Activated CD8-positive, alpha-beta memory T cell treated with anti-CD3 and anti-CD28 coated beads, Interleukin-2, amount 10 ng/mL, durations not matched to agents 7 days and 5 days (primary cell): ENCODE measurements at regions of chr11 and their contacts with region 1.

Region 1: DNA sequence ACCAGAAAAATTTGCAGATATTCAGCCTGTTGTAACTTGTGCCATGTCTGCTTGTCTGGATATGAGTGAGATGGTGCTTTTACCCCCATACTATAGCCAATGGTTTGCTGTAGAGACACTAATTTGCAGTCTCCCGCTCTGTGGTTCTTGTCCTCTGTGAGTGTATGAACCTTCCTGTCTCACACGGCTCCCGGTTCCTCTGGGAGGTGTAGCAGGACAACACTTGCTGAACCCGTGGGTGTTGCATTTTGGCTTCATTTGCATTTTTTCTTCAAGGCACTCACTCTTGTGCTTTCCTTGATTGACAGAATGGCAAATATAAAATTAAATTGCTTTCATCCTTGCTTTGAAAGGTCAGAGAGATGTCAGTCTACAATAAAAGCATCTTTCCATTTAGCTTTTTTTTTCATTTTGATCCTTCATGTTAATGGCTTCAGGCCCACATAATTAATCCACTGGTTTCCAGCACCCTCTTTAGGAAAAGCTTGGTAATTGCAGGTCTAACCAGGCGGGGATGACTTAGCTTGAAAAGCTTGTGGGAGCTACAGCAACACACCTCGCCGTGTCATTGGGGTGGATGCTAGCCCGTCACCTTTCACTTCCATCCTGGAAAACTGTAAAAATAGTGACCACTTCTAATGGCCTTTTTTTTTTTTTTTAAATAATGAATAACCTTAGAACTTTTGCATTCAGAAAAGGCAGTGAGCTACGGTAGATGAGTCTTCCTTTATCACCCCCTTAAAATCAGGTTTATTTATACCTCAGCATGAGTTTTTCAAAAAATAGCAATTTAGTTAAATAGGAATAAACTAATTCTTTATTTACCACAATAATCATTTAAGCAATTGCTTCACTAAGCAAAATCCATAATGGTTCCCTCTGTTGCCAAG is 27.4 kb upstream of the ST14 start:
- DNase-seq: peak; percentile 59
- ATAC-seq: peak; percentile 66
- H3K4me3 Mint-ChIP-seq: no peak overlapping the region
- H3K27ac Mint-ChIP-seq: no peak overlapping the region
- H3K4me1 Mint-ChIP-seq: no peaks in the 10 kb centered on the region
- H3K27me3 Mint-ChIP-seq: no peaks in the 10 kb centered on the region

Region 2: DNA sequence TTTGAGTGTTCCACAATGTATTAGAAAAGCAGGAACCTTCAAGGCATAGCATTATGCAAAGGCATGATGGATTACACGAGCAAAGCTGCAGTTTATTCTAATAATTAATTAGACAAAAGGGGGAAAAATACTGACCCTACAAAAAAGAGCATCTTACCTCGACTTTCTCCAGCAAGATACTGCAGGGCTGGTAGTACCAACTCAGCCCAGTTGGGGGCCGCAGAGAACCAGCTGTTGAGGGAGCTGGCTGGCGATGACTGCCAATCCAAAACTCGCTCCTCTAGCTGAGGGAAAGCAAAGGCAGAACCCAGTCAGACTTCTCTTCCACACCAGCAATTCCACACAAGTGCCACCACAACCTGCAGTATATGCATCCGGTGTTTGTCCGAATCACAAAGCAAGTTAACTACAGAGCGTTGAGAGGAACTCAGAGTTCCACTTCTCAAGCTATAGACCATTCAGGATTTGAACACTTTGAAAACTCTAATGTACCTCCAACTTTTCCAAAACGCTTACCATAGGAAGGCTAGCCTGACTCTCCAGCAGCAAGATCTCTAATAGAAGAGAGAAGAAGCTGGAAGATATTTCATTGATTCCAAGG is 250.5 kb before region 1 on chr11:
- CTCF ChIA-PET with region 1: interaction called, 22 read pairs
- DNase-seq: peak; percentile 57
- ATAC-seq: peak; percentile 51
- H3K4me3 Mint-ChIP-seq: no peak overlapping the region
- H3K27ac Mint-ChIP-seq: no peak overlapping the region
- H3K4me1 Mint-ChIP-seq: no peaks in the 10 kb centered on the region
- H3K27me3 Mint-ChIP-seq: no peaks in the 10 kb centered on the region

Region 3: DNA sequence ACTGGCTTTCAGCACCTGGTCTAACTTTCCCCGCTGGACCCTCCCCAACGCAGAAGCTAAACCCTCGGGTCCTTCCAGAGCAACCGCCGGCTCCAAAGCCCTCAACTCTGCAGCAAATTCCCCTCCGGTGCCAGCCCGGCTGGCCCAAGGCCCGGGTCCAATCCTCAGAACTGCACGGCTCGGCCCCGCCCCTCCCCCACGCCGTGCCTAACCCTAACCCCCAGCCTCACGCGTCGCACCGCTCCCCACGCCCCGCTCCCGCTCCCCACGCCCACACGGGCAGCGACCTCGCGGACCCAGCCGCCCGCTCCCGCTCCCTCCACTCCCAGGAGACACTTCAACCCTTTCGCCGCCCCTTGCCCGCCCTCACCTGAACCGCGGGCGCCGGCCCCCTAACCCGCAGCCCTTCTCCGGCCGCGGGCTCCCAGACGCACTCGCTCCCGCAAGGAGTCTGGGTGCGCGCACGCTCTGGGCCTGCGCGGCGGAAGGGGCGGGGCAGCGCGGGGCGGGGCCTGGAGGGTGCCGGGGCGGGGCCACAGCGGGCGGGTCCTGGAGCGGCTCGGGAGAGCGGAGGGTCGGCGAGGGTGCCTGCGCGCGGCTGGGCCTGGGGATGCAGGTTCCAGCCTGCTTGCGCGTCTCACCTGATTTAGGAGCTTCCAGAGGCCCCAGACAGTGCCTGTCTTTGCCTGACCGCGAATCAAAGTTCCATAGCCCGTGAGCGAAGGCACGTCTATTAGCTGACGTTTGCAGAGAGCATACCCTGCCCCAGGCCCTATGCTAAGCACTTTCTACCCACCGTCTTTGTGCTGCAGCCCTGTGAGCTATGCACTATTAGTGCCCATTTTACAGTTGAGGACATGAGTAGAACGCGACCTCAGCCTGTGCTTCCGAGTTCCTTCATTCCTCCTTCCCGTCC is 236.8 kb before region 1 on chr11 and contains the start of gene NFRKB:
- CTCF ChIA-PET with region 1: interaction called, 11 read pairs
- DNase-seq: peak; percentile 88
- ATAC-seq: peak; percentile 99
- H3K4me3 Mint-ChIP-seq: peak within 1 kb of the TSS; percentile 83
- H3K27ac Mint-ChIP-seq: peak within 1 kb of the TSS; percentile 85
- H3K4me1 Mint-ChIP-seq: peaks cover 29% of the 10 kb centered on the region
- H3K27me3 Mint-ChIP-seq: peaks cover 6% of the 10 kb centered on the region
- total RNA-seq, gene NFRKB: 31.8 to 39.9 TPM

Region 4: DNA sequence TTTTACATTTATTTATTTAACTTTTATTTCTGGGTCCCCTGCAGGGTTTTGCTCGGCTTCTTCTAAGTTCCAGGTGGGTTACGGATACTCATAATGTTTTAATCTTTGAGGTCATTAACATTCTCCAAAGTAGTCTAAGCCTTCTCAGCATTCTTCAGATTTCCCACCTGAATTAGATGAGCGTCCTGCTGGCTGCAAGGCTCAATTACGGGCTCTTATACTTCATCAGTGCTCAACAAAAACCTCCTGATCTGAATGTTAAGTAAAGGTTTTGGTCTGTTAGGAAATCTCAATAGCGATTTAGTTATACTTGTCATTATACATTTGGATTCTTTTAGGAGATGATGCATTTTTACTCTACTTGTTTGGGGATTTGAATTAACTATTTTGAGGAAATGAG is 209.5 kb before region 1 on chr11:
- CTCF ChIA-PET with region 1: interaction called, 102 read pairs
- DNase-seq: no peak
- ATAC-seq: no peak
- H3K4me3 Mint-ChIP-seq: no peak overlapping the region
- H3K27ac Mint-ChIP-seq: no peak overlapping the region
- H3K4me1 Mint-ChIP-seq: peaks cover 11% of the 10 kb centered on the region
- H3K27me3 Mint-ChIP-seq: no peaks in the 10 kb centered on the region

Region 5: DNA sequence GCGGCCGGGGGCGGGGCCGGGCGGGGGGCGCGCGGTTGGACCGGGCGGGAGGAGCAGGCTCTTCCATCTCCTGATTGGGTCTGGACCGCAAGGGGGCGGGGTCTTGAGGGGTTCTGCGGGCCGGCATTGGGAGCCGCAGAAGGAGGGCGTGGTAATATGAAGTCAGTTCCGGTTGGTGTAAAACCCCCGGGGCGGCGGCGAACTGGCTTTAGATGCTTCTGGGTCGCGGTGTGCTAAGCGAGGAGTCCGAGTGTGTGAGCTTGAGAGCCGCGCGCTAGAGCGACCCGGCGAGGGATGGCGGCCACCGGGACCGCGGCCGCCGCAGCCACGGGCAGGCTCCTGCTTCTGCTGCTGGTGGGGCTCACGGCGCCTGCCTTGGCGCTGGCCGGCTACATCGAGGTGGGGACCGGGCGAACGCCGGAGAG is 62.5 kb before region 1 on chr11 and contains the start of gene APLP2:
- CTCF ChIA-PET with region 1: interaction called, 22 read pairs
- DNase-seq: peak; percentile 98
- ATAC-seq: peak; percentile 95
- H3K4me3 Mint-ChIP-seq: peak within 1 kb of the TSS; percentile 90
- H3K27ac Mint-ChIP-seq: peak within 1 kb of the TSS; percentile 91
- H3K4me1 Mint-ChIP-seq: peaks cover 18% of the 10 kb centered on the region
- H3K27me3 Mint-ChIP-seq: peaks cover 27% of the 10 kb centered on the region
- total RNA-seq, gene APLP2: 21.9 to 33.5 TPM

Region 6: DNA sequence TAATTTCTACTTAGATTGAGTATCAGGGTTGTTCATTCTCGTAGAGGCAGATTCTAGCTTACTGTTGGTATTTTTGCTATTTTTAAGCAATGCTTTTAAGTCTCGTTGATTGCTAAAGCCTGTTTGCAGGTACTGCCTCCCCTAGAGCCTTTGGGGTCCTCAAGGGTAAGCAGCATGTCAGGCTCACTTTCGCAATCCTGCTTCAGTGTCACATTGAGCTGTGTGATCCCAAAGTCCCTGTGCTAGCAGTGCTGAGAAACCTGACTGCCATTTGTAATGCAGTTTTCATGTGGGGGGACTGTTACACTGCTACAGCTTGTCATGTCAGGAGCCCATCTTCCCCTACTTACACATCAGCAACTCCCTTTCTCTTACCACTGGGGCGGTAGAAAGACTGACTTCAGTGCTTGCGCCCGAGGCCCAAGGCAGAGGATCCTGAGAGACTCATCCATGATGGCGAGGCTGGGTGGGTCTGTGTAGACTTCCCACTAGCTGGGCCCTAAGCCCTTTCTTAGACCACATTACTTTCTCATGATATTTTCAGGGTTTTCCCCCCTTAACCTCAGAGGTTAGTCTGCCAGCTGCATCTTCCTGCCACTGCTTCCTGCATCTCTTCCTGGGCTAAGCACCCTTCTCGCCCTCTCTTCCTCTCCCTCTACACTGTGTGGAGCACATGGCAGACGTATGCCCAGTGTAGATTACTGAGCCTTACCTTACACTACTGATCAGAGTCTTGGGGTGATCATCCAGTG is 13.4 kb before region 1 on chr11:
- CTCF ChIA-PET with region 1: interaction called, 13 read pairs
- DNase-seq: peak; percentile 44
- ATAC-seq: peak; percentile 58
- H3K4me3 Mint-ChIP-seq: no peak overlapping the region
- H3K27ac Mint-ChIP-seq: no peak overlapping the region
- H3K4me1 Mint-ChIP-seq: peaks cover 27% of the 10 kb centered on the region
- H3K27me3 Mint-ChIP-seq: peaks cover 35% of the 10 kb centered on the region

Region 7: GRCh38 chr11:130145975-130146776 is 14.0 kb after region 1 on chr11:
- CTCF ChIA-PET with region 1: interaction called, 15 read pairs
- DNase-seq: no peak
- ATAC-seq: no peak
- H3K4me3 Mint-ChIP-seq: no peak overlapping the region
- H3K27ac Mint-ChIP-seq: no peak overlapping the region
- H3K4me1 Mint-ChIP-seq: peaks cover 7% of the 10 kb centered on the region
- H3K27me3 Mint-ChIP-seq: peaks cover under 1% of the 10 kb centered on the region